ENCODE measurements at regions of chr1 and their contacts with region 1.

Region 1: DNA sequence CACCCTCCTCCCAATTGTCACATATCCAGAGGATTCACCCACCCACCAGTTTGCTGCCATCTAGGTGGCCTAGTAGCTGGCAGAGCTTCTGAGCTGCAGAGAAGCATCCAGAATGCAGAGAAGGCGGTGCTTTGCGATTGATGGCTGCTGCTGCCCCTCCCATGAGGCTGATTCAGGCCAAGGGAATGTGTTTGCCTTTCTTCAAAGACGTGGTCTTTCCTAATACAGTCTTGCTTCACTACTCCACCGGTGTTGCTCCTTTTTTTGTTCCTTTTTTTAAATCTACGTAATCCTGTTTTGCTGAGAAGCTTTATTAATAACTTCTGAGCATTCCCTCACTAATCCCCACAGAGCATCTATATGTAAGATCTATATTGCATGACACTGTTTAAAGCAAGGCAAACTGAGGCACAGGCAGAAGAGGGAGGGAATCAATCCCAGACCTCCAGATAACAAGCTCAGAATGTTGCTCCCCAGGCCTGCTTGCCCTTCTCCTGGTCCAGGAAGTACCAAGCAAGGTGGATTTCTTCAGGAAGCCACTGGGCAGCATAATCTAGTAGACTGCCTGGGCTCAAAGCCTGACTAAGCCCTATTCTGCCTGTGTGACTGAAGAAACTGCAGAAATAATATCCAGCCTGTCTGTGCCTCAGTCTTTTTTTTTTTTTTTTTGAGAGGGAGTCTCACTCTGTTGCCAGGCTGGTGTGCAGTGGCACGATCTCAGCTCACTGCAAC is 275.4 kb upstream of the FMN2 start:
- DNase-seq: peak in 1 of 3 donors; percentile 52
- H3K4me3 ChIP-seq: no peak overlapping the region
- H3K27ac ChIP-seq: no peak overlapping the region
- H3K4me1 ChIP-seq: peaks cover 10 to 53% (median 23%) of the 10 kb centered on the region in 4 experiments
- H3K27me3 ChIP-seq: no peaks in the 10 kb centered on the region

Region 2: GRCh38 chr1:239308701-239309333 is 507.4 kb before region 1 on chr1:
- CTCF ChIA-PET with region 1: interaction called, 20 read pairs
- POLR2A ChIA-PET with region 1: no interaction called
- DNase-seq: peak; percentile 50 to 75 (median 70)
- H3K4me3 ChIP-seq: no peak overlapping the region
- H3K27ac ChIP-seq: no peak overlapping the region
- H3K4me1 ChIP-seq: no peaks in the 10 kb centered on the region
- H3K27me3 ChIP-seq: no peaks in the 10 kb centered on the region

Region 3: DNA sequence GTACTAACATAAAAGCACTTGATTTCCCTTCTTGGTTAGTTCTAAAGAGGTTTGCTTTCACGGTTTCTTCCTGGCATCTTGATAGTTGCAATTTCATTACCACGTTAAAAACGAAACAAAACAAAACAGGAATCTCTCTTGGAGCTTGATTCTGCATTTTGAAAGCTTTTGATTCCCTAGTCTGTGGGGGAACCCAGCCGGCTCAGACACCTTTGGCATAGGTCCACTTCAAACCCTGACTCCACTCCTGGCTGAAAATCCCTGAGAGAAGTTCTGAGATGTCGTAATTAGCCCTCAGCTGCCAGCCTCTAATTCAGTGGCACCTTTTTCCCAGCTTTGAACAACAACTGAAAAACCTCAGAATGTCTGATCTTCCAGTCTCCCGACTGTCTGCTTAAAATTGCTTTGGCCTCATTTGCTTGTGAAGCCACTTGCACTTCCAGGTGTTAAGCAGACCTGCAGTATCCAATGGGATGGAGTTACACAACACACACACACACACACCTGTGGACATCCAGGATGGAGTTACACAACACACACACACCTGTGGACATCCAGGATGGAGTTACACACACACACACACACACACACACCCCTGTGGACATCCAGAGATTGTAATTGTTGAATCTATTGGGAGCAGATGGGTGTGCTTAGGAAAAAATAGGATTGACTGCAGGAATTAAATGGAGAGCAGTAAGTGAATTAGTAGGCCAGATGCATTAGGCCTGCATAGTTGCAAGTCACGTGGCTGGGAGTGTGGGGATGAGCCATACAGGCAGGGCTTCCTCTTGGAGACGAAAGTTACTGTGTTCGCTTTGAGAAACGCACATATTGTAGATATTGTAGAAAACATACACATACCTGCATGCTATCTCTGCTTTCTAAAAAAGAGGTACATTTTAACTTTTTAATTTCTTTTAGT is 10.1 kb before region 1 on chr1:
- CTCF ChIA-PET with region 1: interaction called, 12 read pairs
- POLR2A ChIA-PET with region 1: no interaction called
- DNase-seq: peak; percentile 25 to 54 (median 43)
- H3K4me3 ChIP-seq: peak overlapping the region in 5 of 7 experiments; percentile 34 to 75 (median 57)
- H3K27ac ChIP-seq: peak overlapping the region; percentile 59 to 80
- H3K4me1 ChIP-seq: peaks cover 0 to 34% (median 13%) of the 10 kb centered on the region in 4 experiments
- H3K27me3 ChIP-seq: no peaks in the 10 kb centered on the region